ENCODE measurements at regions of chr1 and their contacts with region 1.

Region 1: DNA sequence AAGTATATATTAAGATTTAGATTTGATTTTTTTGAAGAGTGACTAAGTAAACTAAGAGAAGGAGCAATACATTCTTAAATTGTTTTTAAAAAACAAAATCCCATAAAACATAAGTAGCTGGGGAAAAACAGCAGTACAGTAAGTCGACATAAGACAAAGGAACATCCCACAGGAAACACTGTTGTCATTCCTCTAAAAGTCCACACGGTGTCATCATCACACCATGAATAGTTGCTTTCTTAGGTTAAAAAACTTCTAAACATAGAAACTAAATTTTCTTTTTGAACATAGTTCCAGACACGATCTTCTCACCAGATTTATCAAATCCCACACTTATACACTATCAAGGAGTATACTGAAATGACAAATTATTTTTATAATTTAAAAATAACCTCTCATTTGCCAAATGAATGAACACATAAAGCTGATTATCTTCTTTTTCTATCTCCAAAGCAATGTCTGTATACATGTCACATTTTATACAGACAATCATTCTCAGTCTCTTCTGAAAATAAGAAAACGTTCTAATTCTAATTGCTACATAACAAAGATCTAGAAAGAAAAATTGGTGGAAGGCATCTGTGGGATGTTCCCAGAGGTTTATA is 15.8 kb downstream of the ODF2L start:
- DNase-seq: peak; percentile 37
- CTCF ChIP-seq: peak; percentile 70

Region 2: DNA sequence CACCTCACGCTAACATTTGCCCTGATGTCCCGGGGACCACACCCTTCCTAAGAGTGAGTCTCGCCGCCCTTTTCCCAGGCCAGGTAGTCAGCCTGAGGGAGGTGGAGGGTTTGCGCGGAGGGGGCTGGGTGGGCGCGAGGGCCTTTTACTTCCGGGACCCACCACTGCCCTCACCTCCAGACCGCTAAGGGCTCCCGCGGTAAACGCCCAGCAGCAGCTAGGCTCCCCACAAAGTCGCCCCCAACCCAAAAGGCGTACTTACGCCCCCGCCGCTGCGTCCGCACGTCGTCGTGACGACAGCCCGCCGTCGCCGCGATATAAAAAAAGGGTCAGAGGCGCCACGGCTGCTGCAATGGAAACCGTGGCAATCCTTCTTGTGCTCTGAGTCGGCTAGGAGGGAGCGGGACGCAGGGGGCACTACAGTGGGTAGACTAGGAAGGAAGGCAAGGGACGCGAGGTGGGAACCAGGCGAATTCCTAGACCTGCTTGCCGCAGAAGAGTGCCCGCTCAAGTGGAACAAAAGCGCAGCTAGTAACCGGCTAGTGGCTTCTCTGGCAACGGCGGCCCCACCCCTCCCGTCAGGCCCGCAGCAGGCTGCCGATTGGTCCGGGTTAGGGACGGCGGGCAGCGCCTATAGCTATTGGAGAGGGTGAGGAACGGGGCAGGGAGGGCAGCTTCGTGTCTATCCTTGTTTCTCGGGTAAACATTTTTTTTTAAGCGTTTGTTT is 15.6 kb after region 1 on chr1 and contains the start of gene ODF2L:
- CTCF ChIA-PET with region 1: interaction called, 12 read pairs
- POLR2A ChIA-PET with region 1: no interaction called
- DNase-seq: peak; percentile 86
- CTCF ChIP-seq: no peak

Region 3: GRCh38 chr1:86507935-86508582 is 127.7 kb after region 1 on chr1:
- CTCF ChIA-PET with region 1: interaction called, 81 read pairs
- POLR2A ChIA-PET with region 1: no interaction called
- DNase-seq: no peak
- CTCF ChIP-seq: peak; percentile 23

Measured in GM10248 (cell line).